ENCODE measurements at regions of chr6 and their contacts with region 1.

Region 1: GRCh38 chr6:159008656-159009288 is 8.8 kb upstream of the RSPH3 start:
- DNase-seq: no peak
- ATAC-seq: peak; percentile 76
- H3K4me3 Mint-ChIP-seq: no peak overlapping the region
- H3K27ac Mint-ChIP-seq: peak overlapping the region; percentile 65
- H3K4me1 Mint-ChIP-seq: peaks cover 28% of the 10 kb centered on the region
- H3K27me3 Mint-ChIP-seq: no peaks in the 10 kb centered on the region
- CTCF ChIP-seq: peak; percentile 83

Region 2: DNA sequence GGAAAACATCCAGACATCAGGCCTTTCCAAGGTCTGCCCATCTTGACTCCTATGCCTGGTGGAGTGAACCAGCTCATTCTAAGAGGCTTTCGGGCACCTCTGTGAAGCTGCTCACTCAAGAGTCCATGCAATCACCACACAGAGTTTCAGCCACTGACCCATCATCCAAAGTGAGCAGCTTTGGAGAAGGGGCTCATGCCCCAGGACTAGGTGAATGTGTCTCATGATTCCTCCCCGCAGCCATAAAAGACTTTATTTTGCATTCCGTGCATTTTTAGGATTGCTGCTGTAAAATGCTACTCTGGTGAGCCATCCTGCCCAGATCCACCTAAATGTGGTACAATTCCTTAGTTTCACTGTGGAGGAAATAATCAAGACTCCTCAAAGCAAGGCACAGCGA is 145.1 kb before region 1 on chr6:
- CTCF ChIA-PET with region 1: no interaction called
- POLR2A ChIA-PET with region 1: no interaction called
- intact Hi-C with region 1: no loop called
- DNase-seq: no peak
- ATAC-seq: no peak
- H3K4me3 Mint-ChIP-seq: no peak overlapping the region
- H3K27ac Mint-ChIP-seq: no peak overlapping the region
- H3K4me1 Mint-ChIP-seq: peaks cover 14% of the 10 kb centered on the region
- H3K27me3 Mint-ChIP-seq: no peaks in the 10 kb centered on the region
- CTCF ChIP-seq: no peak

Region 3: DNA sequence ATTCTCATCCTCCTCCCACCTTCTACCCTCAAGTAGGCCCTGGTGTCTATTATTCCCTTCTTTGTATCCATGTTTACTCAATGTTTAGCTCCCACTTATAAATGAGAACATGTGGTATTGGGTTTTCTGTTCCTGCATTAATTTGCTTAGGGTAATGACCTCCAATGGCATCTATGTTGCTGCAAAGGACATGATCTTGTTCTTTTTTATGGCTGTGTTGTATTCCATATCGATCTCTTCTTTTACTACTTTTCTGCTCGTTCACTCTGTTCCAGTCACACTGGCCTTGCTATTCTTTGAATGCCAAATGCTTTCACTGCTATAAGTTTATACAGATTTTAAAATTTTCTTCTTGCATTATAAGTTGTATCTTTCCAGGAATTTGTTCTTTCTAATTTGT is 66.4 kb before region 1 on chr6:
- CTCF ChIA-PET with region 1: no interaction called
- POLR2A ChIA-PET with region 1: no interaction called
- intact Hi-C with region 1: no loop called
- DNase-seq: no peak
- ATAC-seq: no peak
- H3K4me3 Mint-ChIP-seq: no peak overlapping the region
- H3K27ac Mint-ChIP-seq: no peak overlapping the region
- H3K4me1 Mint-ChIP-seq: peaks cover 10% of the 10 kb centered on the region
- H3K27me3 Mint-ChIP-seq: peaks cover 7% of the 10 kb centered on the region
- CTCF ChIP-seq: no peak

Region 4: DNA sequence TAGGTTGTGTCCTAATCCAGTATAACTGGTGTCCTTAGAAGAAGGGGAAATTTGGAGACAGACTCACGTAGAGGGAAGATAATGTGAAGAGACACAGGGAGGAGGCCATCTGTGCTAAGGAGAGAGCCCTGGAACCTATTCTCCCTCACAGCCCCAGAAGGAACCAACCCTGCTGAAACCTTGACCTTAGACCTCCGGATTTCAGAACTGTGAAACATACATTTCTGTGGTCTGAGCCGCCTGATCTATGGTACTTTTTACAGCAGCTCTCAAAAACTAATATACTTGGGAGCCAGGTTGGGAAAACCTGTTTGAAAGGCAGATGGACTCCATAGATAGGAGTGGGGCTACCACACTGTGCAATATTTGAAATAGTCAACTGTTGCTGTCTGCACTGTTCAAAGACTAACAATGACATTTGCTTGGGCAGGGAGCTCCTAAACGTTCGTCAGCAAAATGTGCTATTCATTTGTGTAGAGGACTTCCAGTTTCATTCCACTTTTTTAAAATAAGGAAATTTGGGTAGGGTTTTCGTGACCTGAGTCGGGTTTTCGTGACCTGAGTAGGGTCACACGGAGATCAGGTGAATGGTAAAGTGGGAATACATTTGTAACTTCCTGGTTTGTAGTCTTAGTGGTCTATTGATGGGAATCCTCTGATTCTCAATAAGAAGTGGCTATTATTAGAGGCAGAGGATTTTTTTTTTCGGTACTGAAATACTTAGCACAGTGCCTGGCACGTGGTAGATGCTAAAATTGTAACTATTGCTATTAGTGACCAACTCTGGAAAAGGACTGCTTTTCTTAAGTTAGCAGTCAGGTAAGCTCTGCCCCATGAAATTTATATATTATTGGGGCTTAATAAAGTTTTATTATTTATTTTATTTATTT is 24.6 kb after region 1 on chr6:
- CTCF ChIA-PET with region 1: interaction called, 113 read pairs
- POLR2A ChIA-PET with region 1: interaction called, 8 read pairs
- intact Hi-C with region 1: no loop called
- DNase-seq: no peak
- ATAC-seq: no peak
- H3K4me3 Mint-ChIP-seq: no peak overlapping the region
- H3K27ac Mint-ChIP-seq: peak overlapping the region; percentile 52
- H3K4me1 Mint-ChIP-seq: peaks cover 36% of the 10 kb centered on the region
- H3K27me3 Mint-ChIP-seq: no peaks in the 10 kb centered on the region
- CTCF ChIP-seq: no peak

Region 5: GRCh38 chr6:159098636-159099106 is 89.9 kb after region 1 on chr6:
- CTCF ChIA-PET with region 1: interaction called, 506 read pairs
- POLR2A ChIA-PET with region 1: interaction called, 5 read pairs
- intact Hi-C with region 1: no loop called
- DNase-seq: peak; percentile 84
- ATAC-seq: peak; percentile 43
- H3K4me3 Mint-ChIP-seq: peak overlapping the region; percentile 69
- H3K27ac Mint-ChIP-seq: peak overlapping the region; percentile 96
- H3K4me1 Mint-ChIP-seq: peaks cover 93% of the 10 kb centered on the region
- H3K27me3 Mint-ChIP-seq: no peaks in the 10 kb centered on the region
- CTCF ChIP-seq: no peak

Region 6: GRCh38 chr6:159125014-159125609 is 116.3 kb after region 1 on chr6:
- CTCF ChIA-PET with region 1: interaction called, 10 read pairs
- POLR2A ChIA-PET with region 1: no interaction called
- intact Hi-C with region 1: no loop called
- DNase-seq: no peak
- ATAC-seq: no peak
- H3K4me3 Mint-ChIP-seq: no peak overlapping the region
- H3K27ac Mint-ChIP-seq: no peak overlapping the region
- H3K4me1 Mint-ChIP-seq: no peaks in the 10 kb centered on the region
- H3K27me3 Mint-ChIP-seq: no peaks in the 10 kb centered on the region
- CTCF ChIP-seq: peak; percentile 30

Measured in activated CD8-positive, alpha-beta T cell treated with anti-CD3 and anti-CD28 coated beads for 36 hours (primary cell).